ENCODE measurements at regions of chr11 and their contacts with region 1.

Region 1: GRCh38 chr11:75429902-75430719 is 2.9 kb downstream of the KLHL35 start:
- DNase-seq: peak; percentile 77
- ATAC-seq: peak; percentile 64
- H3K4me3 ChIP-seq: peak overlapping the region in 3 of 5 experiments; percentile 41 to 56 (median 43)
- H3K4me3 Mint-ChIP-seq: peak overlapping the region; percentile 85
- H3K27ac ChIP-seq: no peak overlapping the region
- H3K27ac Mint-ChIP-seq: peak overlapping the region; percentile 71
- H3K4me1 ChIP-seq: peaks cover 22 to 28% of the 10 kb centered on the region in 2 donors
- H3K4me1 Mint-ChIP-seq: peaks cover 26% of the 10 kb centered on the region
- H3K27me3 ChIP-seq: peaks cover 0 to 63% (median 28%) of the 10 kb centered on the region in 4 experiments
- H3K27me3 Mint-ChIP-seq: peaks cover 48% of the 10 kb centered on the region
- CTCF ChIP-seq: no peak

Region 2: GRCh38 chr11:75399344-75400145 is 30.6 kb before region 1 on chr11 and contains the start of gene RPS3:
- CTCF ChIA-PET with region 1: interaction called, 5 read pairs
- POLR2A ChIA-PET with region 1: no interaction called
- intact Hi-C with region 1: loop called (anchors 2 kb)
- DNase-seq: peak; percentile 94
- ATAC-seq: peak; percentile 94
- H3K4me3 ChIP-seq: peak within 1 kb of the TSS; percentile 71 to 96 (median 76)
- H3K4me3 Mint-ChIP-seq: peak within 1 kb of the TSS; percentile 88
- H3K27ac ChIP-seq: peak within 1 kb of the TSS; percentile 85 to 87
- H3K27ac Mint-ChIP-seq: peak within 1 kb of the TSS; percentile 95
- H3K4me1 ChIP-seq: peaks cover 20 to 29% of the 10 kb centered on the region in 2 donors
- H3K4me1 Mint-ChIP-seq: peaks cover 41% of the 10 kb centered on the region
- H3K27me3 ChIP-seq: no peaks in the 10 kb centered on the region
- H3K27me3 Mint-ChIP-seq: peaks cover 7% of the 10 kb centered on the region
- CTCF ChIP-seq: peak; percentile 29
- total RNA-seq, gene RPS3: 3,554 and 3,642 TPM in 2 replicates

Region 3: GRCh38 chr11:75453916-75454655 is 24.0 kb after region 1 on chr11:
- CTCF ChIA-PET with region 1: no interaction called
- POLR2A ChIA-PET with region 1: no interaction called
- intact Hi-C with region 1: no loop called
- DNase-seq: no peak
- ATAC-seq: no peak
- H3K4me3 ChIP-seq: no peak overlapping the region
- H3K4me3 Mint-ChIP-seq: no peak overlapping the region
- H3K27ac ChIP-seq: no peak overlapping the region
- H3K27ac Mint-ChIP-seq: no peak overlapping the region
- H3K4me1 ChIP-seq: no peaks in the 10 kb centered on the region
- H3K4me1 Mint-ChIP-seq: no peaks in the 10 kb centered on the region
- H3K27me3 ChIP-seq: peaks cover 0 to 3% (median 0%) of the 10 kb centered on the region in 4 experiments
- H3K27me3 Mint-ChIP-seq: no peaks in the 10 kb centered on the region
- CTCF ChIP-seq: no peak

Region 4: GRCh38 chr11:76524919-76525318 is 1094.8 kb after region 1 on chr11:
- CTCF ChIA-PET with region 1: no interaction called
- POLR2A ChIA-PET with region 1: no interaction called
- intact Hi-C with region 1: no loop called
- DNase-seq: no peak
- ATAC-seq: no peak
- H3K4me3 ChIP-seq: no peak overlapping the region
- H3K4me3 Mint-ChIP-seq: no peak overlapping the region
- H3K27ac ChIP-seq: no peak overlapping the region
- H3K27ac Mint-ChIP-seq: no peak overlapping the region
- H3K4me1 ChIP-seq: no peaks in the 10 kb centered on the region
- H3K4me1 Mint-ChIP-seq: no peaks in the 10 kb centered on the region
- H3K27me3 ChIP-seq: no peaks in the 10 kb centered on the region
- H3K27me3 Mint-ChIP-seq: no peaks in the 10 kb centered on the region
- CTCF ChIP-seq: no peak

Measured in B cell (primary cell).